B cell (primary cell): ENCODE measurements at regions of chr5 and their contacts with region 1.

Region 1: GRCh38 chr5:178626484-178627258 is at the start of gene CLK4:
- DNase-seq: peak; percentile 98
- ATAC-seq: peak; percentile 88
- H3K4me3 ChIP-seq: peak within 1 kb of the TSS; percentile 76 to 98 (median 96)
- H3K4me3 Mint-ChIP-seq: peak within 1 kb of the TSS; percentile 99
- H3K27ac ChIP-seq: peak within 1 kb of the TSS; percentile 96 to 99
- H3K27ac Mint-ChIP-seq: peak within 1 kb of the TSS; percentile 100
- H3K4me1 ChIP-seq: peaks cover 38 to 42% of the 10 kb centered on the region in 2 donors
- H3K4me1 Mint-ChIP-seq: peaks cover 54% of the 10 kb centered on the region
- H3K27me3 ChIP-seq: no peaks in the 10 kb centered on the region
- H3K27me3 Mint-ChIP-seq: no peaks in the 10 kb centered on the region
- CTCF ChIP-seq: no peak
- total RNA-seq, gene CLK4: 119 and 132 TPM in 2 replicates

Region 2: DNA sequence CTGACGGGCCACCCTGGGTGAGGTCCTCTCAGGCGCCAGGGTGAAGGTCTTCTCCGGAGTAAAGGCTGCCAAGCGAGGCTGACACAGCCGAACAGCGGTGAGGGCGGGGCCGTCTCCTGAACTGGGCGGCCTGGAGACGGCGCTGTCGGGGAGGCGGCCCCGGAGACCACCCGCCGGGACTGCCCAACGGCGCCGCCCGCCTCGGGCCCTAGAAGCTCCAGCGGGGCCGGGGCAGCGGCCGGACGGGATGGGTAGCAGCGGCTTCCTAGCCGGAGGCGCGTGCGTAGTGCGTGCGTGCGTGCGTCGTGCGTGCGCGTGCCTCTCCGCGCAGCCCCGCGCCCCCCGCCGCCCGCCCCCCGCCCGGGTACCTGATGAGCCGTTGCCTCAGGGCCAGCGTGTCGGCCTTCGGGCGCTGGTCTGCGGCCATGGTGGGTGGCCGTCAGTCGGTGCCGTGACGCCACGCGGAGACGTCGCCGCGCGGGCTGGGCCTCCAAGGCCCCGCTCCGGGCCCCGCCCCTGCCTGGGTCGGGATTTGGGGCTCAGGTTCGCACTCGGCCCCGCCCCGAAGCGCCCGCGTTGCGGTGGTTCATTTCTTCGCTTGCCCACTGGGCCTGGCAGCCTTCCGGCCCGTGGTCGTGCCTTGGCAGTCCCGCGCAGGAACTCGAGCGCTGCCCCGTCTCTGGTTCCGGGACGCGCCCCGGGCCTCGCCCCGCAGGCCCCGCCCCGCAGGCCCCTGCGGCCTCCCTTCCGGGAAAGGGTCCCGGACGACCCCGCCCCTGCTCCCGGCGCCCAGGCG is 394.3 kb before region 1 on chr5 and contains the start of gene PHYKPL:
- CTCF ChIA-PET with region 1: interaction called, 4 read pairs
- POLR2A ChIA-PET with region 1: no interaction called
- intact Hi-C with region 1: loop called (anchors 10 kb)
- DNase-seq: peak; percentile 83
- ATAC-seq: peak; percentile 71
- H3K4me3 ChIP-seq: peak within 1 kb of the TSS; percentile 49 to 85 (median 71)
- H3K4me3 Mint-ChIP-seq: peak within 1 kb of the TSS; percentile 87
- H3K27ac ChIP-seq: peak within 1 kb of the TSS; percentile 77 to 88
- H3K27ac Mint-ChIP-seq: peak within 1 kb of the TSS; percentile 93
- H3K4me1 ChIP-seq: peaks cover 21 to 46% of the 10 kb centered on the region in 2 donors
- H3K4me1 Mint-ChIP-seq: peaks cover 50% of the 10 kb centered on the region
- H3K27me3 ChIP-seq: no peaks in the 10 kb centered on the region
- H3K27me3 Mint-ChIP-seq: no peaks in the 10 kb centered on the region
- CTCF ChIP-seq: no peak
- total RNA-seq, gene PHYKPL: 263 and 275 TPM in 2 replicates

Region 3: DNA sequence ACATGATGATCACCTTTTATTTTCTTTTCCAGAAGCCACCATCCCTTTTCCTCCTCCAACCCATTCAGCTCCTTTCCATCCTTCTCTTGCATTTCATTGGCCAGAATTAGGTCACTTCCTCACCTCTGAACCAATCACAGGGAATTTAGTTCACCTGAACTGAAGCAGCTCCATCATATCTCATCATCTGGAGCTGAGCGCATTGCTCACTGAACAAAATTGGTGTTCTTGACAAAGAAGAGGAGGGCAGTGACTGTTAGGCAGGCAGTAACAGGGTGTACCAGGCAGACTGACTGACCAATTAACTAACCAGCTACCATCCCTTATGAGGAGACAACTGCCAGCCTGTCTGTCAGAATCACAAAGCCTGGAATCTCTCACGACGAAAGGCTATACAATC is 105.6 kb after region 1 on chr5:
- CTCF ChIA-PET with region 1: interaction called, 3 read pairs
- POLR2A ChIA-PET with region 1: interaction called, 3 read pairs
- intact Hi-C with region 1: loop called (anchors 1 kb)
- DNase-seq: no peak
- ATAC-seq: no peak
- H3K4me3 ChIP-seq: no peak overlapping the region
- H3K4me3 Mint-ChIP-seq: peak overlapping the region; percentile 34
- H3K27ac ChIP-seq: no peak overlapping the region
- H3K27ac Mint-ChIP-seq: no peak overlapping the region
- H3K4me1 ChIP-seq: peaks cover 0 to 9% of the 10 kb centered on the region in 2 donors
- H3K4me1 Mint-ChIP-seq: peaks cover 5% of the 10 kb centered on the region
- H3K27me3 ChIP-seq: no peaks in the 10 kb centered on the region
- H3K27me3 Mint-ChIP-seq: peaks cover 3% of the 10 kb centered on the region
- CTCF ChIP-seq: no peak

Region 4: GRCh38 chr5:178859625-178860531 is 233.2 kb after region 1 on chr5 and contains the start of gene ZNF354B:
- CTCF ChIA-PET with region 1: no interaction called
- POLR2A ChIA-PET with region 1: no interaction called
- intact Hi-C with region 1: loop called (anchors 1 kb)
- DNase-seq: peak; percentile 90
- ATAC-seq: peak; percentile 97
- H3K4me3 ChIP-seq: peak within 1 kb of the TSS; percentile 38 to 81 (median 67)
- H3K4me3 Mint-ChIP-seq: peak within 1 kb of the TSS; percentile 93
- H3K27ac ChIP-seq: peak within 1 kb of the TSS; percentile 16 to 71
- H3K27ac Mint-ChIP-seq: peak within 1 kb of the TSS; percentile 90
- H3K4me1 ChIP-seq: peaks cover 4 to 9% of the 10 kb centered on the region in 2 donors
- H3K4me1 Mint-ChIP-seq: peaks cover 22% of the 10 kb centered on the region
- H3K27me3 ChIP-seq: peaks cover 0 to 5% (median 0%) of the 10 kb centered on the region in 4 experiments
- H3K27me3 Mint-ChIP-seq: peaks cover 4% of the 10 kb centered on the region
- CTCF ChIP-seq: no peak
- total RNA-seq, gene ZNF354B: 34.6 and 37.5 TPM in 2 replicates

Region 5: GRCh38 chr5:179023528-179024430 is 397.1 kb after region 1 on chr5 and contains the start of gene ZNF879:
- CTCF ChIA-PET with region 1: no interaction called
- POLR2A ChIA-PET with region 1: no interaction called
- intact Hi-C with region 1: loop called (anchors 2 kb)
- DNase-seq: peak; percentile 97
- ATAC-seq: peak; percentile 94
- H3K4me3 ChIP-seq: peak within 1 kb of the TSS; percentile 53 to 74 (median 67)
- H3K4me3 Mint-ChIP-seq: peak within 1 kb of the TSS; percentile 97
- H3K27ac ChIP-seq: peak within 1 kb of the TSS in 1 of 2 donors; percentile 76
- H3K27ac Mint-ChIP-seq: peak within 1 kb of the TSS; percentile 91
- H3K4me1 ChIP-seq: peaks cover 7 to 18% of the 10 kb centered on the region in 2 donors
- H3K4me1 Mint-ChIP-seq: peaks cover 15% of the 10 kb centered on the region
- H3K27me3 ChIP-seq: no peaks in the 10 kb centered on the region
- H3K27me3 Mint-ChIP-seq: no peaks in the 10 kb centered on the region
- CTCF ChIP-seq: no peak
- total RNA-seq, gene ZNF879: 13.2 and 14.7 TPM in 2 replicates

Region 6: DNA sequence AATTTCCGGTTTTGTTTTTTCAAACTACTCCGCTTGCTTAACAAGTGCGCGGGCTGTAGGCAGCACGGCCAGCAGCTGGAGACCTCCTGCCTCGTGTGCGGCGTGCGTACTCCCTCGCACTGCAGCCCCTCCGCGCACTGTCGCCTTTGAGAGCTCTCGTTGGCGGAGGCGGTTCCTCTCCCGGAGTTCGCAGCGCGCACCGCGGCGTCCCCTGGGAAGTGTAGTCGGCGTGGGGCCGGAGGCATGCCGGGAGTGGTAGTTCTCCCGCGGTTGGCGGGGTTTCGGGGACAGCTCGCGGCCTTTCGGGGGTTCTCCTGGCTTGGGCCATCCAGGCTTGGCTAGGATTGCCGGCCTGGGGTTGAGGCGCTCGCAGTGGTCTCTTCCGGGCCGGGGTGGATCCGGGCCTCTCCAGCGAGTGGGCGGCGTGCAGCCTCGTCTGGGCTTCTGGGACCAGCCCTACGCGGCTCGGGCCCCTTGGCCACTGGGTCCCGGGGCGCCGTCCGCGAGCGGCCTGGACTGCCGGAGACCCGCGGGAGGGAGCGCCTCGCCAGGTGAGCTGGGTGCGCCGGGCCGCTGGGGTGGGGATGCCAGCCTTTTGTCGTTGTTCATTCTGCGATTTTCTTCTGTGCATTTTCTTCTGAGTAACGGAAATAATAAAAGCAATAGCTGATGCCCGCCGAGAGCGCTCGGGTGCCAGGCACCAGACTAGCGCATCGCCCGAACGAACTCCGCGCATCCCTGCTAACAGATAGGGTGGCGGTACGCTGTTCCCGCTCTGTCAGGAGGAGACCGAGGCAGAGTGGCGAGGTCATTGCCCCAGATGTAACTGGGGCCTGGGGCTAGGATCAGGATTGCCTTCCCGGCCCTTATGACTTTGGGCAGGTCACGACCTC is 433.7 kb after region 1 on chr5 and contains the start of gene ZNF354C:
- CTCF ChIA-PET with region 1: no interaction called
- POLR2A ChIA-PET with region 1: no interaction called
- intact Hi-C with region 1: loop called (anchors 5 kb)
- DNase-seq: peak; percentile 87
- ATAC-seq: peak; percentile 97
- H3K4me3 ChIP-seq: peak within 1 kb of the TSS; percentile 45 to 87 (median 78)
- H3K4me3 Mint-ChIP-seq: peak within 1 kb of the TSS; percentile 91
- H3K27ac ChIP-seq: peak within 1 kb of the TSS; percentile 41 to 77
- H3K27ac Mint-ChIP-seq: peak within 1 kb of the TSS; percentile 86
- H3K4me1 ChIP-seq: peaks cover 5 to 11% of the 10 kb centered on the region in 2 donors
- H3K4me1 Mint-ChIP-seq: peaks cover 21% of the 10 kb centered on the region
- H3K27me3 ChIP-seq: peaks cover 0 to 4% (median 0%) of the 10 kb centered on the region in 4 experiments
- H3K27me3 Mint-ChIP-seq: peaks cover 5% of the 10 kb centered on the region
- CTCF ChIP-seq: no peak
- total RNA-seq, gene ZNF354C: 9.1 and 9.5 TPM in 2 replicates

Region 7: DNA sequence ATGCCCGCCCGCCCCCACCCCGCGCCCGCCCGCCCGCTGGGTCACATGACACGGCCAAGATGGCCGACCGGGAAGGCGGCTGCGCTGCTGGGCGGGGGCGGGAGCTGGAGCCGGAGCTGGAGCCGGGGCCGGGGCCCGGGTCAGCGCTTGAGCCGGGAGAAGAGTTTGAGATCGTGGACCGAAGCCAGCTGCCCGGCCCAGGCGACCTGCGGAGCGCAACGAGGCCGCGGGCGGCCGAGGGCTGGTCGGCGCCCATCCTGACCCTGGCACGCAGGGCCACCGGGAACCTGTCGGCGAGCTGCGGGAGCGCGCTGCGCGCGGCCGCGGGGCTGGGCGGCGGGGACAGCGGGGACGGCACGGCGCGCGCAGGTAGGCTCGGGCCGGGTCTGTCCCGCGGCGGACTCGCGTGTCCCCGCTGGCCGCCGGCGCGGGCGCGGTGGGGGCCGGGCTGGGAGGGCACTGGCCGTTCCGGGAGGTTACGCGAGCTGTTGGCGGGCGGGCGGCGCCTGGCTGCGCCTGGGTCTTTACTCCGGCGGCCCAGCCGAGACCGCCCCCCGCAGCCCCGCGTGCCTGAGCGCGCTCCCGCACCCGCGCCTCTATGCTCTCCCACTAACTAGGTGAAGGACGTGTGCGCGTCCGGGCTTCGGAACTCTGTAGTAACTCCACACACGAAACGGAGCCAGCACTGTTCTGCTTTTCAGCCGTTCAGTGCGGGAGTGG is 924.0 kb after region 1 on chr5 and contains the start of gene RUFY1:
- CTCF ChIA-PET with region 1: no interaction called
- POLR2A ChIA-PET with region 1: no interaction called
- intact Hi-C with region 1: loop called (anchors 5 kb)
- DNase-seq: peak; percentile 92
- ATAC-seq: peak; percentile 74
- H3K4me3 ChIP-seq: peak within 1 kb of the TSS; percentile 60 to 92 (median 76)
- H3K4me3 Mint-ChIP-seq: peak within 1 kb of the TSS; percentile 99
- H3K27ac ChIP-seq: peak within 1 kb of the TSS; percentile 90 to 92
- H3K27ac Mint-ChIP-seq: peak within 1 kb of the TSS; percentile 100
- H3K4me1 ChIP-seq: peaks cover 25 to 31% of the 10 kb centered on the region in 2 donors
- H3K4me1 Mint-ChIP-seq: peaks cover 50% of the 10 kb centered on the region
- H3K27me3 ChIP-seq: no peaks in the 10 kb centered on the region
- H3K27me3 Mint-ChIP-seq: no peaks in the 10 kb centered on the region
- CTCF ChIP-seq: no peak
- total RNA-seq, gene RUFY1: 99.8 and 109 TPM in 2 replicates